Right cardiac atrium (tissue), 5 donors: ENCODE measurements at regions of chr12 and their contacts with region 1.

Region 1: GRCh38 chr12:119772431-119772830 is 104.5 kb downstream of the PRKAB1 start:
- DNase-seq: no peak
- ATAC-seq: no peak
- H3K4me3 ChIP-seq: no peak overlapping the region
- H3K27ac ChIP-seq: no peak overlapping the region
- H3K4me1 ChIP-seq: no peaks in the 10 kb centered on the region
- H3K27me3 ChIP-seq: no peaks in the 10 kb centered on the region

Region 2: DNA sequence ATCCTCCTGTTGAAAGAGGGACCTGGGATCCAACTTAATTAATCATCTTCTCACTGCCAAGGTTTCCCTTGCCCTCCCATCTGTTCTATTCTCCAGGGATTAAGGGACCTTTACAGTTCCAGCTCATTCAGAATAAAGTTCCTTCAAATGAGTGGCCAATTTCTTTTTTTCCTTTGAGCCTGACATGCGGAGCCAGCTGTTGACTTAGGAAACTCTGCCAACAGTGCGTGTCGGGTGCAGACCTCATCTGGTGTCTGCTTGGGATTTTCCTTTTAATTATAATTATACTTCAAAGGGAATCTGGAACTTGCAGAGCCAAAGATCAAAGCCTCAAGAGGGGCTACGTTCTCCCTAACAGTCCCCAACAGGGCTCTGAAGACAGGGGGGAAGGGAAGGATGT is 373.1 kb before region 1 on chr12:
- intact Hi-C with region 1: no loop called
- DNase-seq: no peak
- ATAC-seq: no peak
- H3K4me3 ChIP-seq: no peak overlapping the region
- H3K27ac ChIP-seq: no peak overlapping the region
- H3K4me1 ChIP-seq: no peaks in the 10 kb centered on the region
- H3K27me3 ChIP-seq: no peaks in the 10 kb centered on the region

Region 3: GRCh38 chr12:119704065-119704747 is 68.2 kb before region 1 on chr12:
- intact Hi-C with region 1: loop called in 1 of 4 experiments (anchors 10 kb)
- DNase-seq: peak; percentile 37 to 53 (median 50)
- ATAC-seq: peak; percentile 40 to 95
- H3K4me3 ChIP-seq: no peak overlapping the region
- H3K27ac ChIP-seq: no peak overlapping the region
- H3K4me1 ChIP-seq: no peaks in the 10 kb centered on the region
- H3K27me3 ChIP-seq: no peaks in the 10 kb centered on the region